Activated CD4-positive, alpha-beta memory T cell treated with anti-CD3 and anti-CD28 coated beads, Interleukin-2, amount 10 ng/mL, durations not matched to agents 7 days and 5 days (primary cell): ENCODE measurements at regions of chr13 and their contacts with region 1.

Region 1: DNA sequence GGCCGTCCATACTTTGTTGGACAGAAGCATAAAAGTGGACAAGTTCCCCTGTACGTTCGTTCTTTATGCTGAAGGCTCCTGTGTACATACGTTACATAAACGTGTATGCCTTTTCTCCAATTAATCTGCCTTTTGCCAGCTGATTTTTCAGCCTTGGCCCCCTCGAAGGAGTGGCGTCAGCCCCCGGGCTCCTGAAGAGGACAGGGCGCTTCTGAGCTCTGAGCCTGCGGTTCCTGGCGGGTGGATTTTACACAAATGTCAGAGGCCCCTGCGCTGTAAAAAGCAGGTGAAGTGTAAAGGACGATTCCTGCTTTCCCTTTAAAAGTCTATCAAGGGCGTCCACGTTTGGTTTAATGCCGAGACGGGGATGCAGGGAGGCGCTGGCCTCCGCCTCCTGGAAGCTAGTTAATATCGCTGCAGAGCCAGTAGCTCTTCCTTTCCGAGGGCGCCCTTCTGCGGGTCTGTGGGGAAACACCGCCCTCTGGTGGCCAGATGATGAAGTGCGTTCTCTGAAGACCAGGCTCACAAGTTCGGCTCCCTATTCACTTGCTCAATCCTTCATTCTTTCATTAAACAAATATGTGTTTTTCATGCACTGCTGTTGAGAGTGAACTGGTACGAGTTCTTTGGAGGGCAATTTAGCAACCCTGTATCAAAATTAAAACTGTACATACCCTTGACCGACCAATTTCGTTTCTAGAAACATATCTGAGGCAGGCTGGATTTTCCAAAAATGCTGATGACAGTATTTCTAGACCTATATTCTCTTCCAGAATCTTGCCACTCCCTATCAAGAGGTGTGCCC is 62.0 kb downstream of the GPR12 start:
- DNase-seq: peak; percentile 80
- H3K4me3 Mint-ChIP-seq: no peak overlapping the region
- H3K27ac Mint-ChIP-seq: no peak overlapping the region
- H3K4me1 Mint-ChIP-seq: peaks cover 3% of the 10 kb centered on the region
- H3K27me3 Mint-ChIP-seq: peaks cover 12% of the 10 kb centered on the region

Region 2: GRCh38 chr13:26482451-26483197 is 216.0 kb before region 1 on chr13:
- CTCF ChIA-PET with region 1: interaction called, 20 read pairs
- POLR2A ChIA-PET with region 1: no interaction called
- DNase-seq: peak; percentile 71
- H3K4me3 Mint-ChIP-seq: no peak overlapping the region
- H3K27ac Mint-ChIP-seq: no peak overlapping the region
- H3K4me1 Mint-ChIP-seq: peaks cover 8% of the 10 kb centered on the region
- H3K27me3 Mint-ChIP-seq: no peaks in the 10 kb centered on the region

Region 3: GRCh38 chr13:26682606-26683005 is 16.0 kb before region 1 on chr13:
- CTCF ChIA-PET with region 1: interaction called, 12 read pairs
- POLR2A ChIA-PET with region 1: no interaction called
- DNase-seq: no peak
- H3K4me3 Mint-ChIP-seq: no peak overlapping the region
- H3K27ac Mint-ChIP-seq: no peak overlapping the region
- H3K4me1 Mint-ChIP-seq: no peaks in the 10 kb centered on the region
- H3K27me3 Mint-ChIP-seq: peaks cover 10% of the 10 kb centered on the region

Region 4: GRCh38 chr13:26721251-26722121 is 22.9 kb after region 1 on chr13:
- CTCF ChIA-PET with region 1: interaction called, 12 read pairs
- POLR2A ChIA-PET with region 1: no interaction called
- DNase-seq: peak; percentile 45
- H3K4me3 Mint-ChIP-seq: peak overlapping the region; percentile 51
- H3K27ac Mint-ChIP-seq: peak overlapping the region; percentile 62
- H3K4me1 Mint-ChIP-seq: peaks cover 24% of the 10 kb centered on the region
- H3K27me3 Mint-ChIP-seq: no peaks in the 10 kb centered on the region